GM23248 (cell line): ENCODE measurements at regions of chr21 and their contacts with region 1.

Region 1: DNA sequence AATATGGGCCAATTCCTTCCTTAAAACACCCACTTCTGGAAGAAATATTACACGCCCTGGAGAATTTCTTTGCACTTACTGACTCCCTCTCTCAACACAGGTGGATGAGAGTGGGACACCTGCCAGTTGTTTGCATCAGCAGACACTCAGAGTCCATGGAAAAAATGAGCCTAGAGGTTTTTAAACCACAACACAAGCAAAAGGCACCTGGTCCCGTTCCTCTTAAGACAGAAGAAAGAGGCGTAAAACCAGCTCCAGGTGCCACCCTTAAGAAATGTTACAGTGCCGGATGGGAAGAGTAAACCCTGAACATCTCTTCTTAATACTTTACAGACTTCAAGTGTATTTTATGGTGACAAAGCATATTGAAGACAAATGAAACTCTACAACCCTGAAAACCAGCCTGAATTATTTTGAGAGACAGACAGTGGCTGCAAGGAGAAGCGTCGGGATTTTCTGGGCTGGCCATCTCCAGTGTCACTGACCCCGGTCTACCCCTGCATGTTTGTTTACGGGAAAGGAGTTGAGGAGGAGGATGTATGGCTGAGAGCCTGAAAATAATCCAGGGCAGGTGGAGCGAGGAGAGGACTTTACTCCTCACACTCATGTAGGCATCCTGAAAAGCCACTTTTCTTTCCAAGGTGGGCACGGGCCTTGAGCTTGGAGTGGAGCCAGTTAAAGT is 7.8 kb upstream of the RIPK4 start:
- DNase-seq: no peak
- H3K4me3 ChIP-seq: no peak overlapping the region
- H3K27ac ChIP-seq: no peak overlapping the region
- H3K4me1 ChIP-seq: peaks cover 7% of the 10 kb centered on the region; the same call in 1 of the 2 replicates
- H3K27me3 ChIP-seq: no peaks in the 10 kb centered on the region

Region 2: GRCh38 chr21:41612674-41613532 is 161.7 kb before region 1 on chr21:
- in situ Hi-C with region 1: loop called (anchors 5 kb)
- DNase-seq: peak; percentile 98
- H3K4me3 ChIP-seq: peak overlapping the region; percentile 27; the same call in 1 of the 2 replicates
- H3K27ac ChIP-seq: peak overlapping the region; percentile 89
- H3K4me1 ChIP-seq: peaks cover 40% of the 10 kb centered on the region
- H3K27me3 ChIP-seq: no peaks in the 10 kb centered on the region